ENCODE measurements at regions of chr22 and their contacts with region 1.

Region 1: DNA sequence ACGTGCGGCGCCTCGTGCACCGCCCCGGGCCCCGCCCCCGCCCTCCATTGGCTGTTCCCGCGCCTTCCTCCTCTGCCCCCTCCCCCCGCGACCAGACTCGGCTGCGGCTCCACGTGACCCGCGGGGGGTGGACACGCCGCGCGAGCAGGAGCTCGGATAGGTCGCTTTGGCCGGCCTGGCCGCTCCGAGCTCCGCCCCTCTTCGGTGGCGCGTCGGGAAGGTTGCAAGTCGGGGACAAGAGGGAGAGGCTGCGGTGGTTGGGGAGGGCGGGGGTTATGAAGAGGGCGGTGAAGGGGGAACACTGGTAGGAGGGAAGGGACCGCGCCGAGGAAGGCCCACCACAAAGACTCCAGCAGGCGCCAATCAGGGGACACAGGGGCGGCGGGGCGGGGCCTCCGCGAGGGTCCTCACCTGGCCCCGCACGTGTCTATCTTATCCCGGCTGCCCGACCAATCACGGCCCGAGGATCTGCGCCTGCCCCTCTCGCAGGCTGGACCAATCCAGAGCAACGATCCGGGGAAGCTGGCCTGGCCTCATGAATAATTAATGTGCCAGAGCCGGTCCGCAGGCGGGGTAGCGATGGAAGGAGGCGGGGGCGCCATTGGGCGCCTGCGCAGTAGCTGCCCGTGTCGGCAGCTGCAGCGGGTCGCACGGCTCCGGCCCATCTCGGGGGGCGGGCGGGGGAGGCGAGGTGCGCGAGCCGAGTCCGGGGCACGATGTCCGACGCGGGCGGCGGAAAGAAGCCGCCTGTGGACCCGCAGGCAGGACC is at the start of gene TEF:
- DNase-seq: peak; percentile 99
- ATAC-seq: peak; percentile 90
- H3K4me3 Mint-ChIP-seq: peak within 1 kb of the TSS; percentile 78
- H3K27ac Mint-ChIP-seq: peak within 1 kb of the TSS; percentile 97
- H3K4me1 Mint-ChIP-seq: peaks cover 21% of the 10 kb centered on the region
- H3K27me3 Mint-ChIP-seq: peaks cover 4% of the 10 kb centered on the region
- CTCF ChIP-seq: no peak
- total RNA-seq, gene TEF: 9.8 to 12.0 TPM (median 10.2 TPM) in 3 replicates

Region 2: DNA sequence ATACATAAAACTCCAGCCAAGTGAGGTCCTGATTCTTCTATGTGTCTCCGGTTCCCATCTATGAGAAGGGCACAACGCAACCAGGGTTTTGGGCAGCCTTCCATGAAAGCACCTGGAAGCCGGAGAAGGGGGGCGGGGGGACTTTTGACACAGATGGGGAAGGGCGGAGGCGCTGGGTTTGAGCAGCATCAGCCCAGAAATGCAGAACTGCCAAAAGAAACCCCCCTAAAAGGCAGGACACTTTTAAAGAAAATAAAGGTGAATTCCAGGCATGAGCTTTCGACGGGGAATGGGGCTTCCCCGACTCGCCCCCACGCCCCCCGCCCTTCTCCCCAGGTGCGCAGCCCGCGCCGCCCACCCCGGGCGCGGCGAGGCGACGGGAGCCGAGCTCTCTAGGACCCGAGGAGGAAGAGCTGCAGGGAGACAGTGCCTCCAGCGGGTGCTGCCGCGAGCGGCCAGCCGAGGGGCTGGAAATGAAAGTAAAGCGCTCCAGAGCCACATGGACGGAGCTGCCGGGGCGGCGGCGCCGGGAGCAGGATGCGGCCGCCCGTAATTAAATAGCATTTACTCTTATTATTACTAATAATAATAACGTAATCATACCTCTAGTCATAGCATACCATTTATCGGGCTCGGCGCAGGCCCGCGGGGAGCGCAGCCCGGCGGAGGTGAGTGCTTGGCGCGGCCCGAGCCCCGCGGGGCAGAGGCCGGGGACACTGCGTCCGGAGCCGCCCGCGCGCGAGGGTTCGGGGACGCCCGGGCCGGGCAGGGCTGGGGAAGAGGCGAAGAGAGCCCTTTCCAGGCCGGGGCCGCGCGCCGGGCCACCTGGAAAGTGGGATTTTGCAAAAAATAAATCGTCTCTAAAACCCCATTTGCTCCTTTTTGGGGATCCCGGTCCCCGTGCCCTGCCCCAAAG is 80.2 kb before region 1 on chr22 and contains the start of gene ZC3H7B:
- CTCF ChIA-PET with region 1: interaction called, 10 read pairs
- POLR2A ChIA-PET with region 1: interaction called, 4 read pairs
- DNase-seq: peak; percentile 83
- ATAC-seq: peak; percentile 89
- H3K4me3 Mint-ChIP-seq: peak within 1 kb of the TSS; percentile 74
- H3K27ac Mint-ChIP-seq: peak within 1 kb of the TSS; percentile 6; the same call in 1 of the 2 replicates
- H3K4me1 Mint-ChIP-seq: peaks cover 18% of the 10 kb centered on the region
- H3K27me3 Mint-ChIP-seq: no peaks in the 10 kb centered on the region
- CTCF ChIP-seq: no peak
- total RNA-seq, gene ZC3H7B: 61.6 to 64.7 TPM (median 64.7 TPM) in 3 replicates

Region 3: GRCh38 chr22:41334215-41334614 is 47.3 kb before region 1 on chr22:
- CTCF ChIA-PET with region 1: no interaction called
- POLR2A ChIA-PET with region 1: no interaction called
- DNase-seq: no peak
- ATAC-seq: no peak
- H3K4me3 Mint-ChIP-seq: no peak overlapping the region
- H3K27ac Mint-ChIP-seq: no peak overlapping the region
- H3K4me1 Mint-ChIP-seq: no peaks in the 10 kb centered on the region
- H3K27me3 Mint-ChIP-seq: no peaks in the 10 kb centered on the region
- CTCF ChIP-seq: no peak

Region 4: GRCh38 chr22:41394012-41394356 is 12.5 kb after region 1 on chr22:
- CTCF ChIA-PET with region 1: no interaction called
- POLR2A ChIA-PET with region 1: no interaction called
- DNase-seq: no peak
- ATAC-seq: no peak
- H3K4me3 Mint-ChIP-seq: no peak overlapping the region
- H3K27ac Mint-ChIP-seq: no peak overlapping the region
- H3K4me1 Mint-ChIP-seq: no peaks in the 10 kb centered on the region
- H3K27me3 Mint-ChIP-seq: no peaks in the 10 kb centered on the region
- CTCF ChIP-seq: no peak

Region 5: DNA sequence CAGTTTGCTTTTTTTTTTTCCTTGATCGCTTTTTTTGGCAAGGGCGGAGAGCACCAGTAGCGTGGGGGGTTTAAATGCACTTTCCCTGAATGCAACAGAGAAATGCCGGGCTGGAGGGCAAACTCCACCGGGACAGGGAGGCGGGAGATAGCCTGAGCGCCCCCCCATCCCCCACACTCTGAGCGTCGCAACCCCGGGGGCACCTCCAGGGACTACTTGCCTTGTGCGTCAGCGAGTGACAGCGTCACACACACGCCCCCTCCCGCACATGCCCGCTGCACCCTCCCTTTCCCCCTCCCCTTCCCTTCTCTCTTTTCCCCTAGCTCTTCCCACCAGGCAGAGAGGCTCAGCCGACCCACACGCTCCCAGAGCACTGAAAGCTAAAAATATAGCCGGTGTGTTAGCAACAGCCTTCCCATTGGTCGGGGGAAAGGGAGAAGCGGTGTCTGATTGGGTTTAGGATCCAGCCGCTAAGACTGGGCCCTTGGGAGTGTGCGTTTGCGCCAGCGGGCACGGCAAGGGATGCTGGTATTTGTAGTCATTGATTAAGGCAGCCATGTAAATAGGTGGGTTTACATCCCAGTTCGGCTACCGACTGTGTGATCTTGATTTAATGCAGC is 66.8 kb after region 1 on chr22:
- CTCF ChIA-PET with region 1: interaction called, 4 read pairs
- POLR2A ChIA-PET with region 1: interaction called, 24 read pairs
- DNase-seq: peak; percentile 94
- ATAC-seq: peak; percentile 74
- H3K4me3 Mint-ChIP-seq: peak overlapping the region; percentile 96
- H3K27ac Mint-ChIP-seq: peak overlapping the region; percentile 99
- H3K4me1 Mint-ChIP-seq: peaks cover 13% of the 10 kb centered on the region
- H3K27me3 Mint-ChIP-seq: no peaks in the 10 kb centered on the region
- CTCF ChIP-seq: no peak

Region 6: DNA sequence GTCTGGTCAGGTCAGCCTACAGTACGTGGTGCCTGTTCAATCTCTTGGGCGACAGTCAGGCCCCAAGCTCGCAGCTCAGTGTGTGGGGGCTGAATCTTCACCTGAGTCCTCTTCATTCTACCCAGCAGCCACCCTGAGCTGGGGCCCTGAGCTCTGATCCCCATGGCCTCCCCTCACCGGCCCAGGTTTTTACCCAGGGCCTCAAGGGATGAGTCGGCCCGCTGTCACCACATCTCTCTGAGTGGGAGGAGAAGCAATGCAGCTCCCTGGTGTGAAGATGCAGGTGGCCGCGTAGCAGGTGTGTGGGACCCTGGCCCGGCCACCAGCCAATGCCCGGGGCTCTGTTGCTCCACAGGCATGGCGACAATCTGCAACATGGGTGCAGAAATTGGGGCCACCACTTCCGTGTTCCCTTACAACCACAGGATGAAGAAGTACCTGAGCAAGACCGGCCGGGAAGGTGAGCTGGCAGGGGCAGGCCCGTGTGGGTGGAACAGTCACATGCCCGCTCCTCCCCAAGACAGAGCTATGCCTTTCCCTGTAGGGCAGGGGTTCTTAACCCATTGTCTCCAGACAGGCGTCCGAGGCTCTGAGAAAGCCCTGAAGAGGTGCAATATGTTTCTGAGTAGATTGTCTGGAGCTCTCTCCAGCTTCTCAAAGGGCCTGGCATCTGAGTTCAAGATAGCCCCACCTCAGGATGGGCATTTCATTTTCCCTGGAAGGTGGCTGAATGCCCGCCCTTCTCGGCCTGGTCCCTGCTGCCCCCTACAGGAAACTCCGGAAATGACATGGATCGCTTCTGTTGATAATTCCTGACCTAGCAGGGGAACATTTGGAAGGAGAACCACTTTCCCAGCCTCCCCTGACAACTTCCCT is 135.9 kb after region 1 on chr22:
- CTCF ChIA-PET with region 1: interaction called, 19 read pairs
- POLR2A ChIA-PET with region 1: no interaction called
- DNase-seq: peak; percentile 86
- ATAC-seq: peak; percentile 38
- H3K4me3 Mint-ChIP-seq: no peak overlapping the region
- H3K27ac Mint-ChIP-seq: no peak overlapping the region
- H3K4me1 Mint-ChIP-seq: peaks cover 14% of the 10 kb centered on the region
- H3K27me3 Mint-ChIP-seq: no peaks in the 10 kb centered on the region
- CTCF ChIP-seq: peak; percentile 91

Region 7: DNA sequence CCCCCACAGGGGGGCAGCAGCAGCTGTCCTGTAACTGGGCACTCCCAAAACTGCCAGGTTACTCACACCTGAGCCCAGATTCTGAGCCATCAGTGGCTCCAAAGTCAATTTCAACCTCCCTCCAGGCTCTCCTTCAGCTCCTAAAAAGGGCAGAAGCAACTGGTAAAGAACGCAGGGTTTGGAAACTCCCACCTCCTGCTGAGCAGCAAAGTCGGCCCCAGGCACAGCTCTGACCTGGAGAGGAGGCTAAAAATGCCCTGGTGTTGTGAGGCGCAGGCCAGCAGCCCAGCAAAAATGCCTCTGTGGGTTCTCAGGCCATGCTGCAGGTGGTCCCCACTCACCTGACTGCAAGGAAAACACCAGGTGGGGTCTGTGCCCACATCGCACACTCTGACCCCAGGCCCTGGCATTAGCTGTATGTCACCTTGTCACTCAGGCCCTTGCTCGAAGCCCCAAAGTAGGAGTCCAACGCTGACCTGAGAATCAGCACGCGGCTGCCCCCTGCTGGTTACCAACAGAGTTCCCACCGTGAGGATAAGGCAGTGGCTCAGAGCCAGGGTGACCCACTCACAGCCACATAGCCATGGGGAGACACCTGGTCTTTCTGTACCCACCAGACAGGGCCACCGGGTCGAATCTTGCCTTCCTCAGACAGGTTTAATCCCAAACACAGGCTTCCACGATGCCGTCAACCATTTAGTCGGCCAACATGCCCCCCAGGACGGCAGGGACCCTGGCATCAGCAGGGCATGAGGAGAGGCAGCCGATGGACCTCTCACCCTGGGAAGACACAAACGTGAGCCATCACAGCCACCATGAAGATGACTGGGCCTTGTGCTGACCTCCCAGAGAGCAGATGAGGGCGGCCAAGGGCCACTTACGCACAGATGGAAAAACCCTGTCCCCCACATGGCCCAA is 151.7 kb after region 1 on chr22:
- CTCF ChIA-PET with region 1: interaction called, 14 read pairs
- POLR2A ChIA-PET with region 1: no interaction called
- DNase-seq: peak; percentile 87
- ATAC-seq: peak; percentile 79
- H3K4me3 Mint-ChIP-seq: no peak overlapping the region
- H3K27ac Mint-ChIP-seq: peak overlapping the region; percentile 82
- H3K4me1 Mint-ChIP-seq: peaks cover 11% of the 10 kb centered on the region
- H3K27me3 Mint-ChIP-seq: no peaks in the 10 kb centered on the region
- CTCF ChIP-seq: peak; percentile 74